CD14-positive monocyte (primary cell): ENCODE measurements at regions of chr4 and their contacts with region 1.

Region 1: GRCh38 chr4:86416081-86416480 is 56.2 kb upstream of the MAPK10 start:
- DNase-seq: no peak
- H3K4me3 ChIP-seq: no peak overlapping the region
- H3K4me3 Mint-ChIP-seq: no peak overlapping the region
- H3K27ac ChIP-seq: no peak overlapping the region
- H3K27ac Mint-ChIP-seq: no peak overlapping the region
- H3K4me1 ChIP-seq: no peaks in the 10 kb centered on the region
- H3K4me1 Mint-ChIP-seq: peaks cover 2% of the 10 kb centered on the region
- H3K27me3 ChIP-seq: no peaks in the 10 kb centered on the region
- H3K27me3 Mint-ChIP-seq: no peaks in the 10 kb centered on the region
- CTCF ChIP-seq: no peak

Region 2: GRCh38 chr4:86160426-86160825 is 255.7 kb before region 1 on chr4:
- intact Hi-C with region 1: no loop called
- DNase-seq: no peak
- H3K4me3 ChIP-seq: no peak overlapping the region
- H3K4me3 Mint-ChIP-seq: no peak overlapping the region
- H3K27ac ChIP-seq: no peak overlapping the region
- H3K27ac Mint-ChIP-seq: no peak overlapping the region
- H3K4me1 ChIP-seq: no peaks in the 10 kb centered on the region
- H3K4me1 Mint-ChIP-seq: no peaks in the 10 kb centered on the region
- H3K27me3 ChIP-seq: no peaks in the 10 kb centered on the region
- H3K27me3 Mint-ChIP-seq: peaks cover 0 to 1% (median 0%) of the 10 kb centered on the region in 3 donors
- CTCF ChIP-seq: no peak

Region 3: DNA sequence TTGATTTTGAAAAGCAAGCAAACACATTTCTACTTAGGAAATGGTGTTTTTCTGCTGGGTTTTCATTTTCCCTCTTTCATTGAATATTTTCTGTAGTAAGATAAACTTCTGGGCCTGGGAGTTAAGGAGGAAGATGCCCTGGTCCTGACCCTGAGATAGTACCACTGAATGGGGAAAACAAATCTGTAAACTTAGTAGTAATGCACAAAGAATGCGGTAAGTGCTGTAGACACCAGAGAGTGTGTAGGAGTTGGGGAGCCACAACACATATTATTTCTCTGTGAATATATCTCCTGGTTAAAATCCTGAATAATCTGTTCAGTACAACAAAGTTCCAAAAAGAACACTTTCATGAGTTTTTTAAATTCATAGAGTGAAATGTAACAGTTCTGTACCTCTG is 234.5 kb before region 1 on chr4:
- intact Hi-C with region 1: no loop called
- DNase-seq: no peak
- H3K4me3 ChIP-seq: no peak overlapping the region
- H3K4me3 Mint-ChIP-seq: no peak overlapping the region
- H3K27ac ChIP-seq: no peak overlapping the region
- H3K27ac Mint-ChIP-seq: no peak overlapping the region
- H3K4me1 ChIP-seq: no peaks in the 10 kb centered on the region
- H3K4me1 Mint-ChIP-seq: no peaks in the 10 kb centered on the region
- H3K27me3 ChIP-seq: no peaks in the 10 kb centered on the region
- H3K27me3 Mint-ChIP-seq: no peaks in the 10 kb centered on the region
- CTCF ChIP-seq: no peak

Region 4: DNA sequence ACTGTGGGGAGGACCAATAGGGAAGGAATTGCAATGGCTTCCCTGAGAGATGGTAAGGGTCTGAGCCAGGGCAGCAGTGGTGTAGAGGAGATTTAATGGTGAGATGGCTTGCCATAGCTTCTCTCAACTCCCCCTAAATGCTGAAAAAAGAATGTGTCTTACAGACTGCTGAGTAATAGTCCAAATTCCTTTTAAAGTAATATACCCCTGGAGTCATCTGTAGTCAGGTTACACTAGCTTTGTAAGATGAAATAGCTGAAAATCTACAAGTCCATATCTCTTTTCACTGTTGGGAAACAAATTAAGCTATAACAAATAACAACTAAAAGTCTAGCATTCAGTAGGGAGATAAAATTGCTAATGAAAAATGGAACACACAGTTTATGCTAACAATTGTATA is 89.7 kb before region 1 on chr4:
- intact Hi-C with region 1: loop called in 1 of 2 experiments (anchors 10 kb)
- DNase-seq: no peak
- H3K4me3 ChIP-seq: no peak overlapping the region
- H3K4me3 Mint-ChIP-seq: no peak overlapping the region
- H3K27ac ChIP-seq: no peak overlapping the region
- H3K27ac Mint-ChIP-seq: no peak overlapping the region
- H3K4me1 ChIP-seq: no peaks in the 10 kb centered on the region
- H3K4me1 Mint-ChIP-seq: peaks cover 2% of the 10 kb centered on the region
- H3K27me3 ChIP-seq: no peaks in the 10 kb centered on the region
- H3K27me3 Mint-ChIP-seq: no peaks in the 10 kb centered on the region
- CTCF ChIP-seq: no peak

Region 5: GRCh38 chr4:86338989-86339388 is 77.1 kb before region 1 on chr4:
- intact Hi-C with region 1: no loop called
- DNase-seq: no peak
- H3K4me3 ChIP-seq: no peak overlapping the region
- H3K4me3 Mint-ChIP-seq: no peak overlapping the region
- H3K27ac ChIP-seq: no peak overlapping the region
- H3K27ac Mint-ChIP-seq: no peak overlapping the region
- H3K4me1 ChIP-seq: no peaks in the 10 kb centered on the region
- H3K4me1 Mint-ChIP-seq: no peaks in the 10 kb centered on the region
- H3K27me3 ChIP-seq: no peaks in the 10 kb centered on the region
- H3K27me3 Mint-ChIP-seq: peaks cover 0 to 3% (median 2%) of the 10 kb centered on the region in 3 donors
- CTCF ChIP-seq: no peak

Region 6: DNA sequence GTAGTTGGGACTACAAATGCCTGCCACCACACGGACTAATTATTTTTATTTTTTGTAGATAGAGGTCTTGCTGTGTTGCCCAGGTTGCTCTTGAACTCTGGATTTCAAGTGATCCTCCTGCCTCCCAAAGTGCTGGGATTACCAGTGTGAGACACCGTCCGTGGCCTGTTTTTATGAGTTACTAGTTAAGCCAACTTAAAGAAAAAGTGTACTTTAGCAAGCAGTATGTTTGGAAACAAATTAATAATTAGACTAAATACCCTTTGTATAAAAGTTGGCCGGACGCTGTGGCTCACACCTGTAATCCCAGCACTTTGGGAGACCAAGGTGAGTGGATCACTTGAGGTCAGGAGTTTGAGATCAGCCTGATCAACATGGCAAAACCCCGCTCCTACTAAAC is 163.9 kb after region 1 on chr4:
- intact Hi-C with region 1: no loop called
- DNase-seq: no peak
- H3K4me3 ChIP-seq: no peak overlapping the region
- H3K4me3 Mint-ChIP-seq: no peak overlapping the region
- H3K27ac ChIP-seq: no peak overlapping the region
- H3K27ac Mint-ChIP-seq: peak overlapping the region in 1 of 7 donors; percentile 32
- H3K4me1 ChIP-seq: no peaks in the 10 kb centered on the region
- H3K4me1 Mint-ChIP-seq: peaks cover 2% of the 10 kb centered on the region
- H3K27me3 ChIP-seq: no peaks in the 10 kb centered on the region
- H3K27me3 Mint-ChIP-seq: peaks cover 0 to 1% (median 1%) of the 10 kb centered on the region in 3 donors
- CTCF ChIP-seq: no peak